HEK293T (cell line): ENCODE measurements at regions of chr14 and their contacts with region 1.

Region 1: GRCh38 chr14:70027785-70028428 is 148.7 kb downstream of the SMOC1 start:
- DNase-seq: peak; percentile 85

Region 2: DNA sequence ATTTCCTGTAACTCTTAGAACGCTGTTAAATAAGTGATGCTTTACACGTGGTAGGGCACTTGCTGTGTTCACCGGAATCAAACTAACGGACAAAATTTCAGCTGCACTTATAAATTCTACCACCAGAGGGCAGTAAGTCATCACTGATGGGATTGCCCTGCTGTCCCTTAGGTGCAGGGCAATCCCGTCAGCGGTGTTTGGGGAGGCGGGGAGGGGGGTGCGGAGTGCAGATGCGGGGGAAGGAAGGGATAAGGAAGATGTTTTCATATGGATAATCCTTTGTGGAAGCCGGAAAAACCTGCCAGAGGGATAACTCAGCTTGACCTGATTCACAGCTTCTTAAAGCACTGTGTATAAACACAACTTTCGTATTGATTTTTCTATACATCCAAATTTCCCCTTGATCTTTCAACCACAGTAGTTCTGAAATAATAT is 209.1 kb before region 1 on chr14:
- CTCF ChIA-PET with region 1: interaction called, 28 read pairs
- POLR2A ChIA-PET with region 1: no interaction called
- DNase-seq: peak; percentile 81

Region 3: GRCh38 chr14:69873877-69874780 is 153.8 kb before region 1 on chr14:
- CTCF ChIA-PET with region 1: interaction called, 44 read pairs
- POLR2A ChIA-PET with region 1: interaction called, 21 read pairs
- DNase-seq: no peak

Region 4: DNA sequence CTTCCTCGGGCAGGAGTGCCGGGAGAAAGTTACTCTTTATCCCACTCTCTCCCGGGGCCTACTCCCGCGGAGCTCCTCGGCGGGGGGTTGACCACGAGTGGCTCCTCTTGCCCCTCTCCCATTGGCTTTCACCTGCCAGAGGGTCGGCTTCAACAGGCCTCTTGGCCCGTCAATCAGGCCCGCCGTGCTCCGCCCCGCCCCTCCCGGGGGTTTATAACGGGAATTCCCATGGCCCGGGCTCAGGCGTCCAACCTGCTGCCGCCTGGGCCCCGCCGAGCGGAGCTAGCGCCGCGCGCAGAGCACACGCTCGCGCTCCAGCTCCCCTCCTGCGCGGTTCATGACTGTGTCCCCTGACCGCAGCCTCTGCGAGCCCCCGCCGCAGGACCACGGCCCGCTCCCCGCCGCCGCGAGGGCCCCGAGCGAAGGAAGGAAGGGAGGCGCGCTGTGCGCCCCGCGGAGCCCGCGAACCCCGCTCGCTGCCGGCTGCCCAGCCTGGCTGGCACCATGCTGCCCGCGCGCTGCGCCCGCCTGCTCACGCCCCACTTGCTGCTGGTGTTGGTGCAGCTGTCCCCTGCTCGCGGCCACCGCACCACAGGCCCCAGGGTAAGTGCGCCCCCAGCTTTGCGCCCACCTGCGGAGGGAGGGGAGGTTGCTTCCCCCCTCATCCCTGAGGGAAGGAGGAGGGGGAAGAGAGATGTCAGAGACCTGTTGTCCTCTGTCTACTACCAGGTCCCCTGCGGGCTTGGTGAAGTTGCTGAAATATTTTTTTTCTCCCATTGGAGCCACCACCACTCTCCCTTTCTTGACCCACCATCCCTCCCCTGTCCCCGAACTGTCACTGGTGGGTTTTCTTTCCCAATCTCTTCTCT is 148.5 kb before region 1 on chr14 and contains the start of gene SMOC1:
- CTCF ChIA-PET with region 1: interaction called, 44 read pairs
- POLR2A ChIA-PET with region 1: interaction called, 21 read pairs
- DNase-seq: peak; percentile 93

Region 5: GRCh38 chr14:69973846-69974245 is 54.1 kb before region 1 on chr14:
- CTCF ChIA-PET with region 1: no interaction called
- POLR2A ChIA-PET with region 1: no interaction called
- DNase-seq: no peak

Region 6: GRCh38 chr14:70013269-70013873 is 14.5 kb before region 1 on chr14:
- CTCF ChIA-PET with region 1: interaction called, 10 read pairs
- POLR2A ChIA-PET with region 1: no interaction called
- DNase-seq: peak; percentile 72